Dendritic cell treated with granulocyte-macrophage colony-stimulating factor and Interleukin-4, amounts not matched to agents 40 ng/mL and 50 ng/mL, for 4 days (primary cell): ENCODE measurements at regions of chr9 and their contacts with region 1.

Region 1: DNA sequence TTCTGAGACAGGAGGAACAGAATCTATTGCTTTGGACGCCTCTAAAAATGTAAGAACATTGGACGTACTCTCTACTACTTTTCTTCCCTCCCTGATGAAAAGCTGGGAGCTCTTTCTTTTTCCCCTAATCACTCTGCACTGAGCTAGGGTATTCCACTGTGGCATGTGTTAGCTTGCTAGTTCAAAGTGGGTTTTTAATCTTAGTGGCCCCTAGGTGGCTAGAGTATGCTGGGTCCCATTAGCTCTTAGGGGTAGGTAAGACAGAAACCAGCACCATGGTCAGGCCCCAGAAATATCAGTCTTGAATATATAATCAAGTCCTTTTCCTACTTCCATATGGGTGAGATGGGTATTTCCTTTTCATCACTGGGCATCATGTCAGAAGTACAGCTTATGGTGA is 945.2 kb upstream of the PTPRD start:
- H3K4me3 Mint-ChIP-seq: no peak overlapping the region
- H3K27ac Mint-ChIP-seq: no peak overlapping the region
- H3K4me1 Mint-ChIP-seq: no peaks in the 10 kb centered on the region
- H3K27me3 Mint-ChIP-seq: no peaks in the 10 kb centered on the region

Region 2: DNA sequence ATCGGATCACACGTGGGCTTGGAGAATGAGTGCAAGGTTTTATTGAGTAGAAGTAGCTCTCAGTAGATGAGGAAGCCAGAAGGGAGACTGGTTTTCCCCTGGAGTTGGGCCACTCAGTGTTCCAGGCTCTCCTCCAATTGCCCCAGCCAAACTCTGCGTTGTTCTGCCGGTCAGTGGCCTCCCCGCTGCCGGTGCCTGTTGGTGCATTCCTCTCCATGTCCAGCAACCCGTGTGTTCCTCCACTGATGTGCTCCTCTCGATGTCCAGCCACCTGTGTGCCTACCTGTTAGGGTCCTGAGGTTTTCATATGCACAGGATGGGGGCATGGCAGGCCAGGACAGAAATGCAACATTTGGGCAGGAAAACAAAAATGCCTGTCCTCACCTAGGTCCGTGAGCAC is 57.3 kb before region 1 on chr9:
- intact Hi-C with region 1: loop called (anchors 10 kb)
- H3K4me3 Mint-ChIP-seq: no peak overlapping the region
- H3K27ac Mint-ChIP-seq: no peak overlapping the region
- H3K4me1 Mint-ChIP-seq: no peaks in the 10 kb centered on the region
- H3K27me3 Mint-ChIP-seq: no peaks in the 10 kb centered on the region